ENCODE measurements at regions of chr5 and their contacts with region 1.

Region 1: DNA sequence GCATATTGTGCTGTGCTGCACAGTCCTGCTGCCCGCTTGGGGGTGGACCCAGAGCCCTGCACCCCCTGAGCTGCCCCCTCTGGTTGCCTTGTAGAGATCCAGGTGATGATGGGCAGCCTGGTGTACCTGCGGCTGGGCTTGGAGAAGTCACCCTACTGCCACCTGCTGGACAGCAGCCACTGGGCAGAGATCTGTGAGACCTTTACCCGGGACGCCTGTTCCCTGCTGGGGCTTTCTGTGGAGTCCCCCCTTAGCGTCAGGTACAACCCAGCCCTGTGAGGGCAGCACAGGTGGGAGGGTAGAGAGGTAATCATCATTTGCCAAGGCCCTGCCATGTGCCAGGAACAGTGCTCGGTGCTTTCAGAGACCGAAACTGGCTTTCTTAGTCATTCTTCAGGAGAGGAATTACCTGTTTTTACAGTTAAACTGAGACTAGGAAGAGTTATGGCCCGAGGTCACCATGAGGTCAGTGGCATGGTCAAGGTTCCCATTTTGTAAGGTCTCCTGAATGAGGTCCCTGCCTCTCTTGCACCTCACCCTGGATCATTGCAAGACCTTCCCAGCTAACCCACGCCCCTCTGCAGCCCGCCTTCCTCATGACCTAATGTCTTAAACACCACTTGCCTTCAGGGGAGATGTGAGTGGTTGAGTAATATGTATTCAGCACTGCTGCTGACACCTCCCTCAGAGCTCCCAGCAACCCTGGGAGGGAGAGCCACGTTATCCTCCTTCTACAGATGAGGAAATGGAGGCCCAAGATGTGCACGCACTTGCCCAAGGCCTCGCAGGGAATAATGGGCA is 7.5 kb downstream of the NHP2 start:
- DNase-seq: peak; percentile 54 to 76 (median 67)
- H3K4me3 ChIP-seq: no peak overlapping the region
- H3K27ac ChIP-seq: no peak overlapping the region
- H3K4me1 ChIP-seq: peaks cover 0 to 2% (median 0%) of the 10 kb centered on the region in 4 experiments
- H3K27me3 ChIP-seq: no peaks in the 10 kb centered on the region

Region 2: GRCh38 chr5:178120868-178121357 is 25.3 kb before region 1 on chr5:
- CTCF ChIA-PET with region 1: interaction called, 34 read pairs
- POLR2A ChIA-PET with region 1: no interaction called
- DNase-seq: peak; percentile 93 to 97 (median 97)
- H3K4me3 ChIP-seq: peak overlapping the region in 1 of 7 experiments; percentile 28
- H3K27ac ChIP-seq: no peak overlapping the region
- H3K4me1 ChIP-seq: peaks cover 6 to 78% (median 64%) of the 10 kb centered on the region in 4 experiments
- H3K27me3 ChIP-seq: peaks cover 0 to 20% (median 7%) of the 10 kb centered on the region in 5 experiments

Region 3: DNA sequence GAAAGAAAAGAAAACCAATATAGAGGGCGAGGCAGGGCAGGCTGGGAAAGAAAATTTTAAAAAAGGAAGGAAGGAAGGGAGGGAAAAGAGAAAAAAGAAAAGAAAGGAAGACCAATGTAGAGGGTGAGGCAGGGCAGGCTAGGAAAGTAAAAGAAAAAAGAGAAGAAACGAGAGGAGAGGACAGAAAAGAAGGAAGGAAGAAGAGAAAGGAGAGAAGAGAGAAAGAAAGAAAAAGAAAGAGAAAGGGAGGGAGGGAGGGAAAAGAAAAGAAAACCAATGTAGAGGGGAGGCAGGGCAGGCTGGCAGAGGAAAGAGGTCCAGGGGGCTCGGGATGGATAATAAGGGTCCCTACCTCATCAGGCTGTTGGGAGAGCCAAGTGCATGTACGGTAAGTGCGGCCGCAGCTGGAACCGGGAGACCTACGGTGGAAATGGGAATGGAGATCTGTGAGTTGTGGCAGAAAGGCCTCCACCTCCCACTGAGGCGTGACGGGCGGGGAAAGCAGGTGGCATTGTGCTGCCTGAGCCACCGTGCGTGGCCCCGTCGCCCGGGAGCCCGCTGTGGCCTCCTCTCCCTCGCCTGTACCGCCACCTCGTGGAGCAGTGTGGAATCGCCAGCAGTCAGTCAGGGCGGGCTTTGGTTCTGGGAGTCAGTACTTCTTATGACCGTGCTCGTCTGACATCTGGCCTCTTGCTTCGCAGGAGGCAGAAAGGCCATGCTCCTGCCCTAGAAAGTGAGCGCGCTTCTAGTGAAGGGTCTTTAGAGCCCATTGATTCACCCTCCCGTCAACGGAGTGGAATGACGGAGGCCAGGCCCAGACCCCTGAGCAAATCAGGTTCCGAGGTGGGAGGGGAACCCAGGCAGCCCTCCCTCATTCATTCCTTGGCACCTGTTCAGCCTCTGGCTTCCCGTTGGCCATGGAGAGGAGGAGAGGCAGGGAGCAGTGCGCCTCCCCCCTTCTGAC is 17.8 kb after region 1 on chr5:
- CTCF ChIA-PET with region 1: interaction called, 12 read pairs
- POLR2A ChIA-PET with region 1: no interaction called
- DNase-seq: peak; percentile 84 to 91 (median 89)
- H3K4me3 ChIP-seq: peak overlapping the region in 5 of 7 experiments; percentile 19 to 63 (median 57)
- H3K27ac ChIP-seq: no peak overlapping the region
- H3K4me1 ChIP-seq: peaks cover 0 to 10% (median 6%) of the 10 kb centered on the region in 4 experiments
- H3K27me3 ChIP-seq: peaks cover 0 to 8% (median 0%) of the 10 kb centered on the region in 5 experiments